Naive thymus-derived CD8-positive, alpha-beta T cell (primary cell): ENCODE measurements at regions of chr5 and their contacts with region 1.

Region 1: DNA sequence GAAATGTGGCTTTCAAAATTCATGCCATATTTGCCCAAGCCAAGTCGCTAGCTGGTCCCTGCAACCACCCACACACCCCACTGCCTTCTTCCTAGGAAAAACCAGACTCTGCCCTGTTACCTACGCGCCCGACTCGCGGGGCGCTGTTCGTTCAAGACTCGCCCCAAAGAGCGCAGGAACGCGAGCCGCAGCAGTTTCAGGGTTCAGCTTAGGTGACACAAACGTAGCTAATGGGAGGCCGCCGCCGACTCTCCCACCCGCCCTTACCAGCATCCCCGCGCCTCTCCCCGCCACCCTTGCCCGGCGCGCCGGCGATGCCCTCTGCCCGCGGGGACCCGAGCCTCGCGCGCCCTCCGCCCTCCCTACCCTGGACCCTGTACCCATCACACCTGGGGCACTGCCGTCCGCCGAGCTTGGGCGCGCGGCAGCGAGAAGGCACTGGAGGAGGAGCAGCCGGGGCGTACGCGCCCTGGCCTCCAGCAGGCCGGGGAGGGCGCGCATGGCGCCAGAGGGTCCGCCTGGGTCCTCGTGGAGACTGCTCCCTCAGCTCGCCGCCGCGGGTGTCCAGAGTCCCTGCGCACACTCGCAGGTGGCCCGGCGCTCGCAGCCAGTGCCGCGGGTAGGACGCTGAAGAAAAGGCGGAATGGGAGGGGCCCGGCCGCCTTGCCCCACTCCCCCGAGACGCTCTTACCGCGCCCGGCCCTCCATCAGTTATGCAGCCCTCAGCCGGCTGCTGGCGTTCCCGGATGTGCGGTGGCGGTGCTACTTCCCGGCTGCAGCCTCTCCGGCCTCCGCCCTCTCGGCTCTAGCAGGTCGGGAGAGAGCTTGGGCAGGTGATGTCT is at the start of gene EMB:
- DNase-seq: peak; percentile 59 to 89 (median 81)
- ATAC-seq: peak; percentile 69 to 76
- H3K4me3 Mint-ChIP-seq: peak within 1 kb of the TSS; percentile 91 to 97 (median 96)
- H3K27ac Mint-ChIP-seq: peak within 1 kb of the TSS; percentile 95 to 100 (median 98)
- H3K4me1 Mint-ChIP-seq: peaks cover 28 to 82% (median 65%) of the 10 kb centered on the region in 4 donors
- H3K27me3 Mint-ChIP-seq: no peaks in the 10 kb centered on the region
- polyA plus RNA-seq, gene EMB: 109 to 184 (median 164) TPM

Region 2: DNA sequence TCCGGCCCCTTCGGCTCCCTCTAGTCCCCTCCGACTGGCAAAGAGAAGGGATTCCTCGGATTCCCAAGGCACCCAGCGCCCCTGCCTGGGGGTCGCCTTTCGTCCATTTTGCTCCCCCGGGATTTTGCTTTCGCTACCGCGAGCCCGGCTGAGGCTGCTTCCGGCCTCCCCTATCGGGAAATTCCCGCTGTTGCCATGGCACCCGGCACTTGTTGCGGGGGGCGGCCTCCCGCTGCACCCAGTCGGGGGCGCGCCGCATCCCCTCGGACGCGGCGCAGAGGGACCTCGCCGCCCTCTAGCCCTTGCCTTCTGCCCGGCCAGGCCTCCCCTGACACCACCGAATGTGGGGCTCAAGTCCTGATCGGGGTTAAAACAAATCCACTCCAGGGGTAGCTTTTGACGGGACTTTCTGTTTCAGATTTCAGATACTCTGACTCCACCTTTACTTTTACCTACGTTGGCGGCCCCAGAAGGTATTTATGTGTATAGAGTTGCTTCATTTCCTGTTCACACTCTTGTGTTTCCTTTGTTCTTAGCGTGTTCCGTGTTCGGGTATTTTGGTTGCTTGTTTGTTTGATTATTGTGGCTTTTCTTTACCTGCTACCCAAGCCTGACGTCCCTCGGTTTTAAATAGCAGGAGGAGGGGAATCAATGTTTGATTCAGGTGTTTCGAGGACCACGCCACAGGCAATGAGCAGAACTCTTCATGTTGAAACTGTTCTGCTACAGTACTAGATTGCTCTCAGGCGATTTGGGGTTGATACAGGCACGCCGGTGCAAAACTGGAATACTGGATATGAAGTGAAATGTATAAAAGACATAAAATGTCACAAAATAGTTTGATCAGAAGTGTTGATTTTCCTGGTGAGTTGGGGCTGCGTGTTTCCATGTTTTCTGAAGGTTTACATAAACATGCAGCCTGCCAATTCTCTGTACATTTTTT is 227.1 kb after region 1 on chr5:
- POLR2A ChIA-PET with region 1: interaction called, 41 read pairs
- DNase-seq: peak; percentile 82 to 94 (median 90)
- ATAC-seq: peak; percentile 60 to 76
- H3K4me3 Mint-ChIP-seq: peak overlapping the region; percentile 88 to 100 (median 95)
- H3K27ac Mint-ChIP-seq: peak overlapping the region; percentile 96 to 100 (median 98)
- H3K4me1 Mint-ChIP-seq: peaks cover 33 to 75% (median 64%) of the 10 kb centered on the region in 4 donors
- H3K27me3 Mint-ChIP-seq: peaks cover 0 to 1% (median 0%) of the 10 kb centered on the region in 5 donors

Region 3: GRCh38 chr5:50749873-50750272 is 309.0 kb after region 1 on chr5:
- POLR2A ChIA-PET with region 1: interaction called, 34 read pairs
- DNase-seq: peak in 2 of 10 donors; percentile 47 to 51
- ATAC-seq: peak; percentile 66 to 68
- H3K4me3 Mint-ChIP-seq: peak overlapping the region; percentile 41 to 75 (median 70)
- H3K27ac Mint-ChIP-seq: peak overlapping the region; percentile 79 to 96 (median 90)
- H3K4me1 Mint-ChIP-seq: peaks cover 24 to 59% (median 57%) of the 10 kb centered on the region in 4 donors
- H3K27me3 Mint-ChIP-seq: no peaks in the 10 kb centered on the region